ENCODE measurements at regions of chr12 and their contacts with region 1.

Region 1: GRCh38 chr12:110670161-110670701 is 18.7 kb downstream of the HVCN1 start:
- DNase-seq: peak; percentile 95
- ATAC-seq: peak; percentile 63
- H3K4me3 ChIP-seq: peak overlapping the region; percentile 82; the same call in 1 of the 2 replicates
- H3K27ac ChIP-seq: peak overlapping the region; percentile 99
- H3K4me1 ChIP-seq: peaks cover 76% of the 10 kb centered on the region
- H3K27me3 ChIP-seq: no peaks in the 10 kb centered on the region
- CTCF ChIP-seq: no peak
- EP300 ChIP-seq: peak; percentile 81 to 95
- POLR2A ChIP-seq: no peak; the same call in 1 of the 2 replicates
- RAD21 ChIP-seq: 0 out of 2 replicates have a peak, but pooled peaks have one; percentile 6

Region 2: GRCh38 chr12:110606253-110606611 is 64.0 kb before region 1 on chr12:
- CTCF ChIA-PET with region 1: interaction called, 9 read pairs
- POLR2A ChIA-PET with region 1: interaction called, 5 read pairs
- RAD21 ChIA-PET with region 1: interaction called, 15 read pairs
- SMC1A ChIA-PET with region 1: interaction called, 14 read pairs
- in situ Hi-C with region 1: no loop called
- intact Hi-C with region 1: no loop called
- DNase-seq: no peak
- ATAC-seq: peak; percentile 57
- H3K4me3 ChIP-seq: peak overlapping the region; percentile 63
- H3K27ac ChIP-seq: peak overlapping the region; percentile 86
- H3K4me1 ChIP-seq: peaks cover 20% of the 10 kb centered on the region
- H3K27me3 ChIP-seq: no peaks in the 10 kb centered on the region
- CTCF ChIP-seq: no peak
- EP300 ChIP-seq: no peak
- POLR2A ChIP-seq: no peak
- RAD21 ChIP-seq: no peak

Region 3: GRCh38 chr12:110627500-110628195 is 42.6 kb before region 1 on chr12:
- CTCF ChIA-PET with region 1: interaction called, 12 read pairs
- POLR2A ChIA-PET with region 1: interaction called, 13 read pairs
- RAD21 ChIA-PET with region 1: interaction called, 9 read pairs
- SMC1A ChIA-PET with region 1: interaction called, 70 read pairs
- in situ Hi-C with region 1: no loop called
- intact Hi-C with region 1: no loop called
- DNase-seq: no peak
- ATAC-seq: peak; percentile 77
- H3K4me3 ChIP-seq: peak overlapping the region; percentile 23; the same call in 1 of the 2 replicates
- H3K27ac ChIP-seq: peak overlapping the region; percentile 16
- H3K4me1 ChIP-seq: peaks cover 11% of the 10 kb centered on the region
- H3K27me3 ChIP-seq: no peaks in the 10 kb centered on the region
- CTCF ChIP-seq: no peak
- EP300 ChIP-seq: no peak
- POLR2A ChIP-seq: no peak
- RAD21 ChIP-seq: no peak

Region 4: GRCh38 chr12:110639336-110640141 is 30.7 kb before region 1 on chr12:
- CTCF ChIA-PET with region 1: no interaction called
- POLR2A ChIA-PET with region 1: interaction called, 10 read pairs
- RAD21 ChIA-PET with region 1: interaction called, 11 read pairs
- SMC1A ChIA-PET with region 1: interaction called, 70 read pairs
- in situ Hi-C with region 1: no loop called
- intact Hi-C with region 1: no loop called
- DNase-seq: no peak
- ATAC-seq: peak; percentile 67
- H3K4me3 ChIP-seq: no peak overlapping the region
- H3K27ac ChIP-seq: no peak overlapping the region
- H3K4me1 ChIP-seq: peaks cover 61% of the 10 kb centered on the region
- H3K27me3 ChIP-seq: no peaks in the 10 kb centered on the region
- CTCF ChIP-seq: no peak
- EP300 ChIP-seq: no peak
- POLR2A ChIP-seq: no peak
- RAD21 ChIP-seq: no peak

Region 5: GRCh38 chr12:110684312-110684836 is 14.1 kb after region 1 on chr12:
- CTCF ChIA-PET with region 1: interaction called, 21 read pairs
- POLR2A ChIA-PET with region 1: interaction called, 80 read pairs
- RAD21 ChIA-PET with region 1: interaction called, 43 read pairs
- SMC1A ChIA-PET with region 1: interaction called, 80 read pairs
- in situ Hi-C with region 1: no loop called
- intact Hi-C with region 1: loop called (anchors 2 kb)
- DNase-seq: no peak
- ATAC-seq: peak; percentile 2; the same call in 2 of the 3 replicates
- H3K4me3 ChIP-seq: peak overlapping the region; percentile 90
- H3K27ac ChIP-seq: peak overlapping the region; percentile 68
- H3K4me1 ChIP-seq: peaks cover 29% of the 10 kb centered on the region
- H3K27me3 ChIP-seq: no peaks in the 10 kb centered on the region
- CTCF ChIP-seq: no peak
- EP300 ChIP-seq: 0 out of 4 replicates have a peak, but pooled peaks of 1 of the 2 experiments have one; percentile 13
- POLR2A ChIP-seq: no peak
- RAD21 ChIP-seq: no peak

Region 6: DNA sequence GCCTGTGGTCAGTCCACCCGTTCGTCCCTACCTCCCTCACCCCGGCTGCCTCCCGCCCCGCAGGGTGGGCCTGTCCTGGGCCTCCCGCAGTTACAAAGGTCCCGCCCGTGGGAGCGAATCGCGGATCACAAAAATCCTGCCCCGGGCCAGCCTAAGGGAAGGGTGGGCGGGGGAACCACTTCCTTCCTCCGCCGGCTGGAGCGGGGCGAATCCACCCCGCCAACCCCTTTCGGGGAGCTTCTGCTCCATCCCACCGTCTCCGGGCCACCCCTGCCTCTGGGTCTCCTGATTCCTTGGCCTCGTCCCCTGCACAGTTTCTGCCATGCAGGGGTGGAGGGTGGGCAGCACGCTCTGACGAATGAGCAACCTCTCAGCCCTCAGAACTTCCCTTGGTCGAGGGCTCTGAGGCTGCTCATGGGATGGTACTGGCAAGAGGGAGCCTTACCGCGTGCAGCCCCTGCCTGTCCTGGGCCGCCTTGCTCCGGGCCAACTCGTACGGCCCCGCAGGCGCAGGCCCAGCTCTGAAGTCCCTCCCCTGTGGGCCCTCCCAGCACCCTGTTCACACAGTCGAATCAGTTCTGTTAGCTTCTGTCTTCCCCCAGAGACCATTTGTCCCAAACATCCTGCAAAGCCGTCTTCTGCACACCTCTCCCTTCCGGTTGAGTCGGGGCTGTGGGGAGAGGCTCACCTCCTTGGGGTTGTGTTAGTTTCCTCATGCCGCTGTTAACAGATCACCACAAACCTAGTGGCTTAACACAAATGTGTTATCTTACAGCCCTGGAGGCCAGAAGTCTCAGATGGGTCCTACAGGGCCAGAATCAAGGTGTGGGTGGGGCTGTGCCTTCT is 19.3 kb after region 1 on chr12:
- CTCF ChIA-PET with region 1: interaction called, 21 read pairs
- POLR2A ChIA-PET with region 1: interaction called, 80 read pairs
- RAD21 ChIA-PET with region 1: interaction called, 43 read pairs
- SMC1A ChIA-PET with region 1: interaction called, 80 read pairs
- in situ Hi-C with region 1: no loop called
- intact Hi-C with region 1: loop called (anchors 2 kb)
- DNase-seq: peak; percentile 57
- ATAC-seq: peak; percentile 75
- H3K4me3 ChIP-seq: peak overlapping the region; percentile 66
- H3K27ac ChIP-seq: peak overlapping the region; percentile 85
- H3K4me1 ChIP-seq: peaks cover 38% of the 10 kb centered on the region
- H3K27me3 ChIP-seq: no peaks in the 10 kb centered on the region
- CTCF ChIP-seq: no peak
- EP300 ChIP-seq: no peak
- POLR2A ChIP-seq: peak; percentile 89
- RAD21 ChIP-seq: no peak

Region 7: DNA sequence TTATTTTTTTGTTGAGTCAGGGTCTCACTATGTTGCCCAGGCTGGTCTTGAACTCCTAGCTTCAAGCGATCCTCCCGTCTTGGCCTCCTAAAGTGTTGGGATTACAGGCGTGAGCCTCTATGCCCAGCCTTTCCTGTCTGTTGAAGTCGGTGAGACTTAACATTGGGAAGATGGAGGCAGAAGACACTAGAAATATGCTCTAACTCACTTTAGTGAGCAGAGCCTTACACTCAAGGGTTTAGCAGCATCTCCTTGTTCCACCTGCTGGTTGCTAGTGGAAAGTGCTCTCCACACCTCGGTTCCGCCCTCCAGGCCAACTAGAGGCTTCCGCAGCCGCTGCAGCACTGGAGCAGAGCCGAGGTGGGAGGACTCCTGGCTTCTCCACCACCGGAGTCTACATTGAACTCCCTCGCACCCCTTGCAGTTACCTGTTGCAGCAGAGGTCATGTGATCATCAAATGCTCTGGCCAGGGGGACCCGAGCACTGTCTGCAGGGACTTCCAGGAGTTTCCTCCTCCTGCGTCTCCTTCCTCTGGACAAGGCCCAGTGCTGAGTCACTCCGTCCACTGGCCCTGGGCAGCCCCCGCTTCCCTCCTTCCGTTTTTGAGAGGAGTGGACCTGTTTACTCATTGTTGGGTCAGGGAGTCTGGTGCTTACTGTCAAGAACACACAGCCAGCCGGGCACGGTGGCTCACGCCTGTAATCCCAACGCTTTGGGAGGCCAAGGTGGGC is 28.1 kb after region 1 on chr12:
- CTCF ChIA-PET with region 1: interaction called, 9 read pairs
- POLR2A ChIA-PET with region 1: interaction called, 5 read pairs
- RAD21 ChIA-PET with region 1: interaction called, 11 read pairs
- SMC1A ChIA-PET with region 1: interaction called, 24 read pairs
- in situ Hi-C with region 1: no loop called
- intact Hi-C with region 1: no loop called
- DNase-seq: peak; percentile 90
- ATAC-seq: peak; percentile 99
- H3K4me3 ChIP-seq: no peak overlapping the region
- H3K27ac ChIP-seq: peak overlapping the region; percentile 64
- H3K4me1 ChIP-seq: peaks cover 29% of the 10 kb centered on the region
- H3K27me3 ChIP-seq: no peaks in the 10 kb centered on the region
- CTCF ChIP-seq: peak; percentile 88 to 90 (median 89)
- EP300 ChIP-seq: no peak
- POLR2A ChIP-seq: no peak
- RAD21 ChIP-seq: peak; percentile 92

Region 8: GRCh38 chr12:110766311-110767154 is 96.3 kb after region 1 on chr12:
- CTCF ChIA-PET with region 1: no interaction called
- POLR2A ChIA-PET with region 1: no interaction called
- RAD21 ChIA-PET with region 1: no interaction called
- SMC1A ChIA-PET with region 1: no interaction called
- in situ Hi-C with region 1: no loop called
- intact Hi-C with region 1: no loop called
- DNase-seq: no peak
- ATAC-seq: no peak
- H3K4me3 ChIP-seq: no peak overlapping the region
- H3K27ac ChIP-seq: no peak overlapping the region
- H3K4me1 ChIP-seq: no peaks in the 10 kb centered on the region
- H3K27me3 ChIP-seq: no peaks in the 10 kb centered on the region
- CTCF ChIP-seq: no peak
- EP300 ChIP-seq: no peak
- POLR2A ChIP-seq: no peak
- RAD21 ChIP-seq: no peak